ENCODE measurements at regions of chr22 and their contacts with region 1.

Region 1: DNA sequence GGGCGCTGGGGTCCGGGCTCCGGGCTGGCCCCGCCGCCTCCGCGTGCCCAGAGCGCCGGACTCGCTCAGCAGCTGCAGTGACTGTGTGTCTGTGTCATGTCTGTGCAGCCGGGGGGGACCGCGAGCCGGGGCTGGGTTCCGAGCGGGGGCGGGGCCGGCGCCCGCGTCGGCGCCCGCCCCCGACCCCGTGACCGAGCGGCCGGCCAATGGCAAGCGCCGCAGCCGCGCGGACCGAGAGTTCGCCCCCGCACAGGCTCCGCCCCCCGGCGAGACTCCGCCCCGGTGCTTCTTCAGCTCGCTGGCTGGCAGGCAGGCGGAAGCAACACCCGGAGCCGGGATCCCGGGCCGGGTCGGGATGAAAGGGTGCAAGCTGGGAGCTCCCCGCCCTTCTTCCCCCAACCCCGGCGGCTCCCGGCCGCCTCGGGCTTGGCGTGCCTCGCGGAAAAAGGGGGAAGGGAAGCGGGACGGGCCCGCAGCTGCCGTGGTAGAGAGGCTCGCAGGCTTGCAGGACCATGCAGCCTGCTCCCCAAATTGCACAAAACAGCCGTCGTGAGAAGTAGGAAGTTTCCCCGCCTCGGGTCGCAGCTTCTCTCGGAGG is 750 bp upstream of the LARGE1 start:
- DNase-seq: peak; percentile 98
- ATAC-seq: peak; percentile 95 to 96
- H3K4me3 ChIP-seq: peak overlapping the region; percentile 69
- H3K27ac ChIP-seq: peak overlapping the region; percentile 39
- H3K4me1 ChIP-seq: peaks cover 41% of the 10 kb centered on the region
- H3K27me3 ChIP-seq: peaks cover 15% of the 10 kb centered on the region
- CTCF ChIP-seq: no peak

Region 2: GRCh38 chr22:33958741-33959140 is 37.7 kb after region 1 on chr22:
- intact Hi-C with region 1: no loop called
- DNase-seq: no peak
- ATAC-seq: no peak
- H3K4me3 ChIP-seq: no peak overlapping the region
- H3K27ac ChIP-seq: no peak overlapping the region
- H3K4me1 ChIP-seq: no peaks in the 10 kb centered on the region
- H3K27me3 ChIP-seq: no peaks in the 10 kb centered on the region
- CTCF ChIP-seq: no peak

Region 3: DNA sequence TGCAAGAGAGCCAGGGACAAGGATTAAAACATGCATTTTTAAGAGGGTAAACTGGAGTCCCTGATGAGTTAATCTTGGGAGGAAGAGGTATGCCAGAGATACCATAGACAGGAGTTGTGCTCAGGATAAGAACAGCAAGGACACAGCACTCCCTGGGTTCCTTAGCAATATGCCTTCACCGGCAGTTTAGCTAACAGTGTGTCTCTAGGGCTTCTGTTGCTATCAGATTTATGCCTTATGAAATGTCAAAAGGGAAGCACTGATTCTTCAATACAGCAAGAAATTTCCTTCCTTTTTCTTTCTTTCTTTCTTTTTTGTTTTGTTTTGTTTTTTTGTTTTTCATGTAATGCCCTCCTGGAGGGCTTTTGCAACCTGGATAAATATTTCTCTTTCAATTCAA is 70.6 kb after region 1 on chr22:
- intact Hi-C with region 1: no loop called
- DNase-seq: no peak
- ATAC-seq: no peak
- H3K4me3 ChIP-seq: no peak overlapping the region
- H3K27ac ChIP-seq: no peak overlapping the region
- H3K4me1 ChIP-seq: no peaks in the 10 kb centered on the region
- H3K27me3 ChIP-seq: no peaks in the 10 kb centered on the region
- CTCF ChIP-seq: no peak

Region 4: DNA sequence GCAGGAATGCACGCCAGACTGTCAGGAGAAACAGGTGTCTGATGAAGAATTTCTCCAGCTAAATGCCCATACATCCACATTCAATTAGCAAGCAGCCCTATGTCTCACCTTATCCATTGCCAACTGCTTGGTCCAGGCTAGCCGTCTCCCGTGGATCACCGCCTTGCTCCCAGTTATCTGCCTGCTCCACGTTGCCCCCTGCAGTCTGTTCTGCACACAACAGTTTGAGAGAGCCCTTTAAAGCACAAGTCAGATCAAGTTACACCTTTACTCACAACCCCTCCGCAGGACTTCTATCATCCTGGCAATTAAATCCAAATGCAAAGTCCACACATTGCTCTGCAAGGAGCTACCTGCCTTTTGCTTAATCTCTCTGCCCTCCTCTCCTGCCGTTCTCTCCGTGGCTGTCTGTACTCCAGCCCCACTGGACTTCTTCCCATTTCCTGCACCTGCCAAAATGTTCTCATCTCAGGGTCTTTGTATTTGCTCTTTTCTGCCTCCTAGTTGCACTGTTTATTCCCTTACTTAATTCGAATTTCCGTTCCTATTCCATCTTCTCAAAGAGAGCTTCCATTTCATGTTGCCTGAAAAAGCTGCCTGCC is 184.5 kb after region 1 on chr22:
- intact Hi-C with region 1: loop called (anchors 10 kb)
- DNase-seq: peak; percentile 55
- ATAC-seq: peak; percentile 75 to 79
- H3K4me3 ChIP-seq: no peak overlapping the region
- H3K27ac ChIP-seq: no peak overlapping the region
- H3K4me1 ChIP-seq: no peaks in the 10 kb centered on the region
- H3K27me3 ChIP-seq: no peaks in the 10 kb centered on the region
- CTCF ChIP-seq: peak; percentile 62

Measured in lower lobe of right lung (tissue), 2 donors.